ENCODE measurements at regions of chr11 and their contacts with region 1.

Region 1: GRCh38 chr11:22829231-22830081 is at the start of gene SVIP:
- DNase-seq: peak; percentile 85 to 98
- H3K4me3 ChIP-seq: peak within 1 kb of the TSS; percentile 61 to 91 (median 80)
- H3K27ac ChIP-seq: no peak within 1 kb of the TSS
- H3K4me1 ChIP-seq: peaks cover 0 to 4% (median 0%) of the 10 kb centered on the region in 4 experiments; a peak in 1 of 7 replicates
- H3K27me3 ChIP-seq: 0 out of 7 replicates have a peak, but pooled peaks cover 0 to 2% (median 0%) of the 10 kb centered on the region in 4 experiments
- CTCF ChIP-seq: peak; percentile 78 to 90 (median 79)
- EP300 ChIP-seq: no peak
- POLR2A ChIP-seq: peak in 1 of 2 experiments; percentile 67; a peak in 2 of 3 replicates
- RAD21 ChIP-seq: peak; percentile 47 to 53
- total RNA-seq, gene SVIP: 10.5 and 11.4 TPM in 2 replicates

Region 2: GRCh38 chr11:22851477-22851876 is 22.0 kb after region 1 on chr11:
- CTCF ChIA-PET with region 1: interaction called, 10 read pairs
- POLR2A ChIA-PET with region 1: no interaction called
- DNase-seq: no peak
- H3K4me3 ChIP-seq: no peak overlapping the region
- H3K27ac ChIP-seq: no peak overlapping the region
- H3K4me1 ChIP-seq: no peaks in the 10 kb centered on the region
- H3K27me3 ChIP-seq: no peaks in the 10 kb centered on the region
- CTCF ChIP-seq: no peak
- EP300 ChIP-seq: no peak
- POLR2A ChIP-seq: no peak
- RAD21 ChIP-seq: no peak